ENCODE measurements at regions of chr15 and their contacts with region 1.

Region 1: DNA sequence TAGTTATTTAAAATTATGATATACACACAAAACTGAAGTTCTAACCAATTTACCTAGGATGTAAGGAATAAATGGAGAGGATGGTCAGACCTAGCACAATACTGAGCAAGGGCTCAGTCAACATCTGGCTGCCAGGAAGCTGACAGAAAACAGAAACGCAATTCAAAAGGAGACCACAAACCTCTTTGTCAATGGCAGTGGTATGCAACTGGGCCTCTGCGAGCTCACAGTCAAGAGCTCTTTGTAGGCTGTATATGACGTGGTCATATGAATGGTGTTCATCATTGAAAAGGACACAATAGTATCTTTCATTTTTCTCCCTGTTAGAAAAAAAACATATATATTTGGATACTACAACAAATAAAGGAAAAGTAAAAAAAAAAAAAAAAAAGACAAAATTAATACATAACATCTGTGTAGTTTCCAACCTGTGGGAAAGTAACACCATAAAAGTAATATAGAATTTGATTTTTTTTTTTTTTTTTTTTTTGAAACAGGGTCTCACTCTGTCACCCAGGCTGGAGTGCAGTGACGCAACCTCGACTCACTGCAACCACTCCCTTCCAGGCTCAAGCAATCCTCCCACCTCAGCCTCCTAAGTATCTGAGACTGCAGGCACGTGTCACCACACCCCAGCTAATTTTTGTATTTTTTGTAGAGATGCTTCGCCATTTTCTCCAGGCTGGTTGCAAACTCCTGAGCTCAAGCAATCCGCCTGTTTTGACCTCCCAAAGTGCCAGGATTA is 37.9 kb downstream of the UBR1 start:
- DNase-seq: no peak
- H3K4me3 ChIP-seq: no peak overlapping the region
- H3K27ac ChIP-seq: no peak overlapping the region
- H3K4me1 ChIP-seq: no peaks in the 10 kb centered on the region
- H3K27me3 ChIP-seq: no peaks in the 10 kb centered on the region
- CTCF ChIP-seq: no peak

Region 2: GRCh38 chr15:42811435-42811834 is 256.5 kb before region 1 on chr15:
- CTCF ChIA-PET with region 1: interaction called, 11 read pairs
- POLR2A ChIA-PET with region 1: no interaction called
- intact Hi-C with region 1: no loop called
- DNase-seq: no peak
- H3K4me3 ChIP-seq: no peak overlapping the region
- H3K27ac ChIP-seq: no peak overlapping the region
- H3K4me1 ChIP-seq: no peaks in the 10 kb centered on the region
- H3K27me3 ChIP-seq: no peaks in the 10 kb centered on the region
- CTCF ChIP-seq: no peak

Measured in PC-9 (cell line).